Activated CD4-positive, alpha-beta T cell treated with anti-CD3 and anti-CD28 coated beads, Interleukin-2, amount 10 ng/mL, durations not matched to agents 7 days and 5 days (primary cell): ENCODE measurements at regions of chr7 and their contacts with region 1.

Region 1: DNA sequence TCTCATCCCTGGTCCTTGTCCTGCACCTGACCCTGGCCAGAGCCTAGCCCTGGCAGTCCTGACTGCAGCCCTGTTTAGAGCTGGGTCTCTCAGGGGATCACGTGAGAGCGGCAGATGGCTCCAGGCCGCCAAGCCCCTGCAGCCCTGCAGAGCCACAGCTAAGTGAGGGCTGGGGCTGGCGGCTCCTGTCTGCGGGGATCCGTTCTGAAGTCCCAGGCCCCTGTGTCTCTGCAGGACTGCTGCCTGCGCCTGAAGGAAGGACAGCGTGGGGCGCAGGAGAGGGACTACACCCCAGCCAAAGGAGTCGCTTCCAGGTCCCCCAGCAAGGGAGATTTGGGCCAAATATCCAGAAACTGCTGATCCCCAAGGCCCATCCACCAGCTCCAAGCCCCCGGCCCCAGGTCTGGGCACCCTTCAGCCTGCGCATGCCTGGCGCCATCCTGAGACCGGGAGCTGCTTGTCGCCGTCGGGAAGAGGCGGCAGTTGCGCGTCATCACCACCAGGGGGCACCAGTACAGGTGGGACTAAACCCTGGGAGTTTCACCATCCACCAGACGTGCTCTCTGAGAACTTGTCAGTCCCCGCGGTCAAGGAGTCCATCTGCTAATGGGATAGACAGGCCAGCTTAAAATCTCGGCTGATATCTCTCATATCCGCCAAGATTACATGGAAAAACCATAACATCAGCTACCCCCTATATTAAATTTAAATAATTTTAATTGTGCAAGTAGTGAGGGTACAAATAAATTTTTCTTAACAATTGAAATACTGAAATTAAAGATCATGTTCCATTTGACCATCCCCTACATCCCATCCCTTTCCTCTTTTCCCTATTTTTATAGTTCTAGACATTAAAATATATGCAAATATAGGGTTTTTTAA is 25.1 kb upstream of the GHRHR start:
- DNase-seq: peak; percentile 68
- H3K4me3 Mint-ChIP-seq: no peak overlapping the region
- H3K27ac Mint-ChIP-seq: no peak overlapping the region
- H3K4me1 Mint-ChIP-seq: no peaks in the 10 kb centered on the region
- H3K27me3 Mint-ChIP-seq: peaks cover 33% of the 10 kb centered on the region

Region 2: DNA sequence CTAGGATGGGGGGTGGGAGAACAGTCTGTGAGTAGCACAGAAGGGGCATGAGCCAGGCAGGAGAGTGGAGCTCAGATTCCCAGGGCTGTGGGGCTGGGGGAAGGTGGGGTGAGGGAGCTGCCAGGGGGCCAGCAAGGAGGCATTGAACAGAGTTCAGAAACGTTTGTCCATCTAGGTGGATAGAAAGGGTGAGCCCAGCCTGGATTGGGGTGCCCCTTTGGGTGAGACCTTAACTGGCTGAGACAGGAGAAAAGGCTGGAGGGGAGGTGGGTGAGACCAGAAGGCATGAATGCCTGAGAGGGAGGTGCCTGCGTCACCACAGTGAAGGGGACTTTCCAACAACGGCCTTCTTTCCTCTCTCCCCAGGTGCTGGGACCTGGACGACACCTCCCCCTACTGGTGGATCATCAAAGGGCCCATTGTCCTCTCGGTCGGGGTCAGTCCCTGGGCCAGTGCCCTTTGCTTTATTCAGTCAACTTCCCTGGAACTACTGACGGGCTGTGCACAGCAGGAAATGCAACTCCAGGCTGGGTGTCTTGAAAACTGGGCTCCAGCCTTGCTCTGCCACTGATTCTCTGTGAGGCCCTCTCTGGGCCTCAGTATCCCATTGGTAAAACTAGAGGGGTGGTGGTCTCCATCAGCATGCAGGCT is 36.1 kb after region 1 on chr7:
- CTCF ChIA-PET with region 1: interaction called, 10 read pairs
- POLR2A ChIA-PET with region 1: interaction called, 5 read pairs
- DNase-seq: peak; percentile 41
- H3K4me3 Mint-ChIP-seq: no peak overlapping the region
- H3K27ac Mint-ChIP-seq: no peak overlapping the region
- H3K4me1 Mint-ChIP-seq: peaks cover 6% of the 10 kb centered on the region
- H3K27me3 Mint-ChIP-seq: peaks cover 22% of the 10 kb centered on the region